Vagina (tissue), 2 donors: ENCODE measurements at regions of chr11 and their contacts with region 1.

Region 1: DNA sequence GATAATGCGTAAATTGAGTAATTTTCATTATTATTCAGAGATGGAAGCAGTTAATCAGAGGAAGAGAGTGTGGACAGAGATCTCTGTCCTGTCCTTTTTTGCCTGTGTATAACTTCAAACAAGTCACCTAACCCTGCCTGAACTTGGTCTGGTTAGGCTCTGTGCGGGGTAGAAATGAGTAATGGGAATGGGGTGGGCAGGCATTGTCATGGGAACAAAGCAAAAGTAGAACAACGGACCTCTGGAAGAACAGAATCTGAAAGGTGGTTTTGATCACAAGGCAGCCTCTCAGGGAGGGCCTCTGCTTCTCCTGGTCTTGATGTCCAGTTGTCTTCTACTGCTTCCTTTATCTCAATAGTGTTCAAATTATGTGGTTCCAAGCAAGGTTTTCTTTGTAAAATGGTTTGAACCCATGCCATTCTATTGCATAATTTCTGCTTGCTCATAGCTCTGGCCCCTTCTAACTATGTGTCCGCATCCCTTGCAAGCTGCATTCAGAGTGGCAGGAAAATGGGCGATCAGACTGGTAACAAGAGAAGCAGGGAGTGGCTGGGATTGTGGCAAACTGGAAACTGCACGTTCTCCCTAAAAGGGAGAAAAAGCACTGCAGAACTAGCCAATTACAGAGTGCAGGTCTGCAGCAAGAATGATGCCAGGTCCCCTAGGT is 76.1 kb downstream of the PRR5L start:
- DNase-seq: no peak
- H3K4me3 ChIP-seq: no peak overlapping the region
- H3K27ac ChIP-seq: peak overlapping the region; percentile 42
- H3K4me1 ChIP-seq: peaks cover 6% of the 10 kb centered on the region
- H3K27me3 ChIP-seq: no peaks in the 10 kb centered on the region
- CTCF ChIP-seq: no peak
- POLR2A ChIP-seq: no peak

Region 2: DNA sequence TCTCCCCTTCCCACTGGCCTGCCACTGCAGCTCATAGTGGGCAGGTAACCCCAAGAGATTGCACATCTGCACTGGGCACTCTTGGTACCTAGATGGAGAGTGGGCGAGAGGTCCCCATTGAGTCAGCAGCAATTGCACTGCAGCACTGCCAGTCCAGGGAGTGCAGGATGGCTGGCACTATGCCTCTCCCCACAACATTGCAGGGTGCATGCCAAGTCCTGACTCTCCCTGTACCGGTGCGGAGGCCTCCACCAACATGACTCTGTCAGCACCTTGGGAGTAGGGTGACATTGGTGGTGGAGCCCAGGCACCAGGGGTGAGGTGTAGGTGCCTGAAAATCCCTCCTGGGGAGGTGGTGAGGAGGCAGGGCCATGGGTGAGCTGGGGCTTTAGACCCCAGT is 55.6 kb after region 1 on chr11:
- intact Hi-C with region 1: loop called (anchors 2 kb)
- DNase-seq: no peak
- H3K4me3 ChIP-seq: no peak overlapping the region
- H3K27ac ChIP-seq: no peak overlapping the region
- H3K4me1 ChIP-seq: peaks cover 22% of the 10 kb centered on the region
- H3K27me3 ChIP-seq: no peaks in the 10 kb centered on the region
- CTCF ChIP-seq: no peak
- POLR2A ChIP-seq: no peak